Right cardiac atrium (tissue), 5 donors: ENCODE measurements at regions of chr13 and their contacts with region 1.

Region 1: GRCh38 chr13:99033814-99034213 is 56.0 kb upstream of the DOCK9 start:
- DNase-seq: no peak
- ATAC-seq: peak; percentile 77 to 79
- H3K4me3 ChIP-seq: no peak overlapping the region
- H3K27ac ChIP-seq: no peak overlapping the region
- H3K4me1 ChIP-seq: peaks cover 3% of the 10 kb centered on the region
- H3K27me3 ChIP-seq: no peaks in the 10 kb centered on the region

Region 2: DNA sequence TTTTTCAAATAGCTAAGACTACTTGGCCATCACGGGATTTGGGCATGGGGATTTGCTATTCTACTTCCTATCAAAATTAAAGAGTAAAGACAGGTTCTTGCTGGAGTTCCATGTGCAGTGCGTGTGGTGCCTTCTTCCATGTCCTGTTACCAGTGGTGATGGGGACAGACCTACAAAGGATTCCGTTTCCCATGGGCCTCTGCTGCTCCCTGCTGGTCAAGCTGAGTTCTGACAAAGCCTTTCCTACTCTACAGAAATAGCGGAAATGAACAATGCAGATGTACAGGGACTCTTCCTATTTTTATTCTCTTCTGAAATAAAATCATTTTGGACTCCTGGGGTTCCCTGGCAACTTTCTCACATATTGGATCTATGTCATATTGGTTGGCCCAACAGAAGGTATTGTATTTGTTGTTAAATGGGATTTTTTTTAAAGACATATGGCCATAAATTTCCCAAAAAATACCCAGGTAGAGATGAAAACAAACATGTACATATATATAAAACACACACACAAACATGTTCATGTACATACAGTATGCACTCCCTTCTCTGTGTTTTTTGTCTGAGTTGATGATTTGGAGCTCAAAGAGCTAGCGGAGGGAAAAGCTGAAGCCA is 190.8 kb before region 1 on chr13:
- intact Hi-C with region 1: loop called in 1 of 4 experiments (anchors 5 kb)
- DNase-seq: peak; percentile 65 to 86 (median 83)
- ATAC-seq: peak; percentile 84 to 85
- H3K4me3 ChIP-seq: no peak overlapping the region
- H3K27ac ChIP-seq: no peak overlapping the region
- H3K4me1 ChIP-seq: no peaks in the 10 kb centered on the region
- H3K27me3 ChIP-seq: no peaks in the 10 kb centered on the region

Region 3: DNA sequence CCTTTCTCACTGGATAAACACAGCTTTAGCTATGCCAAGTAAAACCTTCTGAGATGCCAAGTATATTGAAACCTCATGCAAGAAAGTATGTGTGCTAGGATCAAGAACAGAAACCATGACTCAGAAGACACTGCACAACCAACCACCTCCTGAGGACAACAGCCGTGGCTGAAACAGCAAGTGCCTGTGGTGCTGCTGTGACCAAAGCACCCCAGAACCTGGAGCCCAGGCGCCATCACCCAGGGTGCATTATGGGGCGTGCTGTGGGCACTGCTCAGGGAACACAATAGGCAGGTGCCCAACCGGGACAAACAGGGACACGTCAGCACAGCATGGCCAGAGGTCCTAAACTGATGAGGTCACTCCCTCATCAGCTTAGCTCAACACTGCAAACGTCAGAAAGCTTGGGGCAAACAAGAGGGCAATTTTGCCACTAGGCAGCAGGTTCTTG is 180.0 kb before region 1 on chr13:
- intact Hi-C with region 1: loop called in 1 of 4 experiments (anchors 10 kb)
- DNase-seq: no peak
- ATAC-seq: peak in 1 of 2 donors; percentile 33
- H3K4me3 ChIP-seq: no peak overlapping the region
- H3K27ac ChIP-seq: no peak overlapping the region
- H3K4me1 ChIP-seq: no peaks in the 10 kb centered on the region
- H3K27me3 ChIP-seq: no peaks in the 10 kb centered on the region

Region 4: DNA sequence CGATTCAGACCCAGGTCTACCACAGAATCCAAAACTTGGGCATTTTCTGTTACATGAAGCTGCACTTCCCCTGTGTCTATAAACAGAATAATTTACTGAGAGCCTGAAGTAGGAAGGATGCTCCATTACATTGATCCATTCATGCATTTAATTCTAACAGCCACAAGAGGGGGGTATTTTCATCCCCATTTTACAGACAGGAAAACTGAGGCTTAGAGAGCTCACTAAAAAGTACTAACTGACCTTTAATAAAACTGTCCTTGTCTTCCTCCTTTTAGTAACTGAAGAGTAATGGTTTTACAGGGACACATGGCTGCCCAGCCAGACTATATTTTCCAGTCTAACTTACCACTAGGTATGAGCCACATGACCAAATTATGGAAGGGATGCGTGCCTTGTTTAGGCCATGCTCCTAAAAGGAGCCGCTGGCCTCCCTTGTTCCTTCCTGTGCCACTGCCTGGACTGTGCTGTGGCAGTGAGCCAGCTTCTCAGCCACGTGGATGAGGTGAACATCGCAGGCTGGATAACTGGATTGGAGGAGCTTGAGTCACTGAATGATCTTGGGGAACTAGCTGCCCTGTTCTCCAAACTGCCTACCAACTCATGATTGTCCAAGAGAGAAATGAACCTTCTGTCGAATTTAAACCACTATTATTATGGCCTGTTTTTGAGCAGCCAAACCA is 164.3 kb before region 1 on chr13:
- intact Hi-C with region 1: loop called in 1 of 4 experiments (anchors 10 kb)
- DNase-seq: peak; percentile 45 to 78 (median 59)
- ATAC-seq: peak; percentile 52 to 70
- H3K4me3 ChIP-seq: no peak overlapping the region
- H3K27ac ChIP-seq: no peak overlapping the region
- H3K4me1 ChIP-seq: no peaks in the 10 kb centered on the region
- H3K27me3 ChIP-seq: no peaks in the 10 kb centered on the region

Region 5: GRCh38 chr13:98890186-98890585 is 143.6 kb before region 1 on chr13:
- intact Hi-C with region 1: loop called in 1 of 4 experiments (anchors 5 kb)
- DNase-seq: no peak
- ATAC-seq: peak in 1 of 2 donors; percentile 54
- H3K4me3 ChIP-seq: no peak overlapping the region
- H3K27ac ChIP-seq: no peak overlapping the region
- H3K4me1 ChIP-seq: peaks cover 7% of the 10 kb centered on the region
- H3K27me3 ChIP-seq: no peaks in the 10 kb centered on the region

Region 6: GRCh38 chr13:98959786-98960605 is 73.8 kb before region 1 on chr13:
- intact Hi-C with region 1: loop called in 1 of 4 experiments (anchors 10 kb)
- DNase-seq: no peak
- ATAC-seq: peak; percentile 53 to 80
- H3K4me3 ChIP-seq: no peak overlapping the region
- H3K27ac ChIP-seq: peak overlapping the region; percentile 43
- H3K4me1 ChIP-seq: peaks cover 34% of the 10 kb centered on the region
- H3K27me3 ChIP-seq: no peaks in the 10 kb centered on the region